GM23248 (cell line): ENCODE measurements at regions of chr19 and their contacts with region 1.

Region 1: GRCh38 chr19:16779539-16780163 is 49.5 kb upstream of the SIN3B start:
- DNase-seq: no peak
- H3K4me3 ChIP-seq: no peak overlapping the region
- H3K27ac ChIP-seq: no peak overlapping the region
- H3K4me1 ChIP-seq: no peaks in the 10 kb centered on the region
- H3K27me3 ChIP-seq: no peaks in the 10 kb centered on the region; the same call in 1 of the 2 replicates

Region 2: DNA sequence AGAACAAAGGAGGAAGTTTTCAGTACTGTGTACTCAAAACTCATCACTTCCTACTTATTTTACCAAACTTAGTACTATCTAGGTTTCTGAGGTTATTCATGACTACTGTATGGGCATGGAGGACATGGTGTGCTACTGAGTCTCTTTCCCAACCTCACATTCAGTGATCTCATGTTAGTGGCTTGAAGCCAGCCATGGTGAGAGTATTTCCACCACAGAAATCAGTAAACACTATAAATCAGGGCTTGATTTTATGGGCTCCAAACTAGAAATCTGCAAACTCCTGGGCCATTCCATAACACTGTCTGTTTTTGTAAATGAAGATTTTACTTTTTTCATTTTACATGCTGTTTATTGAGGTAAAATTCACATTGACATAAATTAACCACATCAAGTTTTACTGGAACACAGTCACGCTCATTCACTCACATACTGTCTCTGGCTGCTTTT is 171.3 kb before region 1 on chr19:
- in situ Hi-C with region 1: no loop called
- DNase-seq: peak; percentile 94
- H3K4me3 ChIP-seq: no peak overlapping the region
- H3K27ac ChIP-seq: peak overlapping the region; percentile 46
- H3K4me1 ChIP-seq: peaks cover 29% of the 10 kb centered on the region
- H3K27me3 ChIP-seq: no peaks in the 10 kb centered on the region

Region 3: DNA sequence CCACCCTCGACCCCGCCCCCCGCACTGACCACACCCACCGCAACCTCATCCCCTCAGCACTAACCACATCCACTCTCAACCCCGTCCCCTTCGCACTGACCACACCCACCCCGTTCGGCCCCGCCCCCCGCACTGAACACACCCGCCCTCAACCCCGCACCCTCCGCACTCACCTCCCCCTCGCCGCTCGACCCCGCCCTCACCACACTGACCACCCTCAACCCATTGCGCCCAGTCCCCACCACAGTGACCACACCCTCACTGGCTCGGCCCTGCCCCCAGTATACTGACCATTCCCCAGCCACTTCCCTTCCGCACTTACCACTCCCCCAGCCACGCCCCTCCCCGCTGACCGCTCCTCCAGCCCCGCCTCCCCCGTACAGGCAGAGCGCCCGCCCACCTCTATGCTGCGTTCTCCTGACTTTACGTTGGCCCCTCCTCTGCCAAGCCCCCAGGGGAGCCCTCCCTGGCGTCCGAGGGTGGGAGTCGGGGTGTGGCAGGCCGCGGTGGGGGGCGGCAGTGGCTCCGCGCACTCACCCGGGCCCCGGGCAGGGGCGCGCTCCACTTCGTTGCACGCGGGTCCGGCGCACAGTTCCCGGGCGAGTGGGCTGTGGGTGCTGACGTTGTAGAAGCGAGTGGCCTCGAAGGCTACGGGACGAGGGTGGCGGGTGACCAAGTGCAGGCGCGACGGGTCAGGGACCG is 117.7 kb after region 1 on chr19:
- in situ Hi-C with region 1: no loop called
- DNase-seq: peak; percentile 93
- H3K4me3 ChIP-seq: peak overlapping the region; percentile 71
- H3K27ac ChIP-seq: no peak overlapping the region
- H3K4me1 ChIP-seq: no peaks in the 10 kb centered on the region
- H3K27me3 ChIP-seq: no peaks in the 10 kb centered on the region

Region 4: GRCh38 chr19:17052439-17053210 is 273.0 kb after region 1 on chr19:
- in situ Hi-C with region 1: loop called (anchors 10 kb)
- DNase-seq: peak; percentile 75
- H3K4me3 ChIP-seq: no peak overlapping the region
- H3K27ac ChIP-seq: no peak overlapping the region
- H3K4me1 ChIP-seq: no peaks in the 10 kb centered on the region
- H3K27me3 ChIP-seq: no peaks in the 10 kb centered on the region